BJ (cell line): ENCODE measurements at regions of chr3 and their contacts with region 1.

Region 1: GRCh38 chr3:157136647-157137387 is 23.1 kb downstream of the CCNL1 start:
- DNase-seq: no peak
- H3K4me3 ChIP-seq: no peak overlapping the region
- H3K27me3 ChIP-seq: no peaks in the 10 kb centered on the region
- CTCF ChIP-seq: no peak

Region 2: DNA sequence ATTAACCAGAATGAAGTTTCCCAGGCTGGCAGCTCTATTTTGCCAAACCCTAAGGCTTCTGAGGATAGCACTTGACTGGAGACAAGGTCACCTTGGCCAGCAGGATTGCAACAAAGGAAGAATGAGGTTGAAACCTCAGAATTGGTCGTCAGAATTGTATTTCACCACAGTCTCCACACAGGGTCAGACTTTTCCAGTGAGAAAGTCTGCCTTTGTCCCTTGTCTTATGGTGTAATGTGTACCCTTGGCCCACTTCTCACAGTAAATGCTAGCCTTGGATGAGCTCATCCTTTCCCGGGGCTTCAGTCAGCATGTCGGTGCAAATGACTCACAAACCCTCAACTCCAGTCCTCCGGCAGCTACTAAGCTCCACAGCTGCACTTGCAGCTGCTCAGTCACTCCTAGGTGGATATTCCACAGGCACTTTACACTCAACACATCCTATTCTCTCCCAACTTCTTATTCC is 601.6 kb before region 1 on chr3:
- CTCF ChIA-PET with region 1: interaction called, 12 read pairs
- POLR2A ChIA-PET with region 1: interaction called, 3 read pairs
- DNase-seq: peak; percentile 95
- H3K4me3 ChIP-seq: no peak overlapping the region
- H3K27me3 ChIP-seq: no peaks in the 10 kb centered on the region
- CTCF ChIP-seq: peak; percentile 32; the same call in 1 of the 2 replicates

Region 3: GRCh38 chr3:157045238-157045850 is 91.5 kb before region 1 on chr3:
- CTCF ChIA-PET with region 1: no interaction called
- POLR2A ChIA-PET with region 1: no interaction called
- DNase-seq: no peak
- H3K4me3 ChIP-seq: no peak overlapping the region
- H3K27me3 ChIP-seq: 0 out of 2 replicates have a peak, but pooled peaks cover 2% of the 10 kb centered on the region
- CTCF ChIP-seq: no peak

Region 4: DNA sequence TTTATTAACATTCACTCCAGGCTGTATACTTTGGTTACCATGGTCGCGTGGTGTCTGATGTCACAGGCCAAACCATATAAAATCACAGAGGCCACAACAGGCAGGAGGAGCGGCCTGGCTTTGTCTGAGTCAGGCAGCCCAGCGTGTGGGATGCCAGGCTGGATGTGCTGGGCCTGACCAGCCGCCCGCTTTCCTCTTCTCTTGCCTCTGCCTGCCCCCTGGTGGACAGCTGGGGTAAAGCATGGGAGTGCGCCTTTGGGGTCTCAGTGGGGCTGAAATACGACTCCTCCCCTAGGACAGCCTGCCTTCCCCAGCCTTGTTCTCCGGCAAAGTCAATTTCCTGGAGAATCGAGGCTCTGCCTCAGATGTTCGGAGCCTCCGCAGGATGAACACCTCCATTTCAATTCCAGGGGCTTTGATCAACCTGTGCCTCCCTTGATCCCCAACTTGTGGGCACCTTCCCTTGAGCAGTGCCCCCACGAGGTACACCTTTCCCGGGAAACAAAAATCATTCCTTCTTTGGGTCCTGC is 55.1 kb before region 1 on chr3:
- CTCF ChIA-PET with region 1: interaction called, 140 read pairs
- POLR2A ChIA-PET with region 1: no interaction called
- DNase-seq: peak; percentile 81
- H3K4me3 ChIP-seq: no peak overlapping the region
- H3K27me3 ChIP-seq: no peaks in the 10 kb centered on the region
- CTCF ChIP-seq: peak; percentile 96

Region 5: GRCh38 chr3:157151627-157152026 is 14.8 kb after region 1 on chr3:
- CTCF ChIA-PET with region 1: interaction called, 12 read pairs
- POLR2A ChIA-PET with region 1: no interaction called
- DNase-seq: no peak
- H3K4me3 ChIP-seq: no peak overlapping the region
- H3K27me3 ChIP-seq: no peaks in the 10 kb centered on the region
- CTCF ChIP-seq: no peak